ENCODE measurements at regions of chr17 and their contacts with region 1.

Region 1: DNA sequence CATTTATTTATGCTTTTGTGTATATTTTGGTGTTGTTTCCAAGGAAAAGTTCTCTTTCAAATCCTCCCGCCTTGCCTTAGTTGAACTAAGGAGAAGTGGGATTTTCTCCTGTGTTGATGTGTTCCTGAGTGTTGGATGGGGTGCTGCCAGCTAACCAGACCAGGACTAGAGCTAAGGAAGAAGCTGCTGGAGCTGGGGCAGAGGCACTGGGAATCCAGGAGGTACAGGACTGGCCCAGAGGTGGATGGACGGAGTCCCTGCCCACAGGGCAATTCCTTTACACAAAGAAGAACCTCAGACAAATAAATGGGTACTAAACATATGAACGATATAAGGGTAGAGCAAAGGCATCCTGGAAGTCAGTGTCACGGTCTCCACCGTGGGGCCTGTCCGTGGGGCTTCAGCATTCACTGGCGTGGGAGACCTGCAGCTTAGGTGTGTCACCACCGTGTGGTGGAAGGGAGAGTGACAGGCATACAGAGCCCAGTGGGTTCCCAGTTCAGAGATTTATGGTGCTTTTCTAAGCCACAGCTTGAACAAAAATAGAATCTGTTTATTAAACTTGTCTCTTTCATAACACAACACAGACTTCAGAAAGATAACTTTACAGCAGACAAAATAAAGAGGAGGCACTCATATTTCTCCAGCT is 270.7 kb downstream of the NTN1 start:
- DNase-seq: peak; percentile 11
- H3K4me3 Mint-ChIP-seq: no peak overlapping the region
- H3K27ac Mint-ChIP-seq: no peak overlapping the region
- H3K4me1 Mint-ChIP-seq: peaks cover 22% of the 10 kb centered on the region
- H3K27me3 Mint-ChIP-seq: peaks cover 2% of the 10 kb centered on the region

Region 2: DNA sequence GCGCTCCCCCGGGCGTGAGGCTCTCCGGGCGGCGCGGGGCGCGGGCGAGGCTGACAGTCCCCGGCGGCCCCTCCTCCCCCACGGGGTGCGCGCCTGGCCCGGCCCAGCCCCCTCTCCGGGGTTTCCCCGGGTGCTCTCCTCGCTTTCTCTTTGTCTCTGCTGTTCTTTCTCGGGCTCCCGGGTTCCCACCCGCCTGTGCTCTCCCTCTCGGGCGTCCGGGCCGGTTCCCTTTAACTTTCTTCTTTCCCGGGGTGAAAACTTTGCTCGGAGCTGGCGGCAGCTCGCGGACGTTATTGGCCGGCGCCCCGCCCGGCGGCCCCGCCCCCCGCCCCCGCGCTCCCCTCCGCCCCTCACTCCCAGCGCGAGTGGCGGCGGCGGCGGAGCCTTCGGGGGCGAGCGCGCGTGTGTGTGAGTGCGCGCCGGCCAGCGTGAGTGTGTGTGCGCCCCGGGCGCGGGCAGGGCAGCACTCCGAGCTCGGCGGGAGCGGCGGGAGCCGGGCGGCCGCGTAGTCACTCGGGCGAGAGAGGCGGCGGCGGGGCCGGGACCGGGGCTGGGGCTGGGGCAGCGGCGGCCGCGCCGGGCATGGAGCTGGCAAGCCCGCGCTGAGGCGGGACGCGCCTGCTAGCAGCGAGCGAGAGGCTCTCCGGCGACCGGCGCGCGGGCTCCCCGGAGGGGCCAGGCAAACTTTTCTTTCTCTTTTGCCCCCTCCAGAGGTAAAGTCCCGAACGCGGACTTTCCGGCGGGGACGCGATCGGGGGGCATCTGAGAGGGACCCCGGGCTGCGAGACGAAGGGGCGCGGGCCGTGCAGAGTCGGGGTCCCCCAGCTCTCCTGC is 270.7 kb before region 1 on chr17 and contains the start of gene NTN1:
- intact Hi-C with region 1: loop called (anchors 10 kb)
- DNase-seq: peak; percentile 58
- H3K4me3 Mint-ChIP-seq: peak within 1 kb of the TSS; percentile 79
- H3K27ac Mint-ChIP-seq: peak within 1 kb of the TSS; percentile 17
- H3K4me1 Mint-ChIP-seq: peaks cover 4% of the 10 kb centered on the region
- H3K27me3 Mint-ChIP-seq: peaks cover 55% of the 10 kb centered on the region
- total RNA-seq, gene NTN1: 0.34 and 0.44 TPM in 2 replicates

Region 3: DNA sequence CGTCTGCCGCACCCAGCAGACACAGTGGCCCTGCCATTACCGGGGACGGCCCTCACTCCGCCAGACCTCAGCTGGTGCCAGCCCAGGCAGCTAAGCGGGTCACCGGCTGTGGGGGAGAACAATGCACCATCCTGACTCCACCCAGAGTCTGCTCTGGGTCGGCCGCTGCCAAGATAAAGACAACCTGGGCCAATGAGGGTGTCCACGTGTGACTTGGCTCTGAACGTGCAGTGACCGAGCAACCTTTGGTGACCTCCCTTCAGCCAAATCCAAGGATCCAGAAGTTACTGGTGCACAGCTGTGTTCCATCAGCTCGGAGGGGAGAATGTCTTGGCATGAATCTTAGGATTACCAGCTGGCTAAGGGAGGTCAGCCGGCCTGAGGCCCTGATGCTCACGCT is 114.8 kb before region 1 on chr17:
- intact Hi-C with region 1: loop called (anchors 10 kb)
- DNase-seq: no peak
- H3K4me3 Mint-ChIP-seq: no peak overlapping the region
- H3K27ac Mint-ChIP-seq: no peak overlapping the region
- H3K4me1 Mint-ChIP-seq: peaks cover 7% of the 10 kb centered on the region
- H3K27me3 Mint-ChIP-seq: peaks cover 2% of the 10 kb centered on the region

Region 4: GRCh38 chr17:9256751-9257629 is 35.0 kb before region 1 on chr17:
- intact Hi-C with region 1: loop called (anchors 1 kb)
- DNase-seq: no peak
- H3K4me3 Mint-ChIP-seq: no peak overlapping the region
- H3K27ac Mint-ChIP-seq: no peak overlapping the region
- H3K4me1 Mint-ChIP-seq: peaks cover 13% of the 10 kb centered on the region
- H3K27me3 Mint-ChIP-seq: peaks cover 1% of the 10 kb centered on the region

Region 5: GRCh38 chr17:9522074-9522473 is 230.0 kb after region 1 on chr17:
- intact Hi-C with region 1: loop called (anchors 10 kb)
- DNase-seq: no peak
- H3K4me3 Mint-ChIP-seq: no peak overlapping the region
- H3K27ac Mint-ChIP-seq: no peak overlapping the region
- H3K4me1 Mint-ChIP-seq: peaks cover 12% of the 10 kb centered on the region
- H3K27me3 Mint-ChIP-seq: no peaks in the 10 kb centered on the region

Region 6: GRCh38 chr17:9763643-9764042 is 471.6 kb after region 1 on chr17:
- intact Hi-C with region 1: no loop called
- DNase-seq: no peak
- H3K4me3 Mint-ChIP-seq: no peak overlapping the region
- H3K27ac Mint-ChIP-seq: no peak overlapping the region
- H3K4me1 Mint-ChIP-seq: no peaks in the 10 kb centered on the region
- H3K27me3 Mint-ChIP-seq: peaks cover 2% of the 10 kb centered on the region